ENCODE measurements at regions of chr4 and their contacts with region 1.

Region 1: DNA sequence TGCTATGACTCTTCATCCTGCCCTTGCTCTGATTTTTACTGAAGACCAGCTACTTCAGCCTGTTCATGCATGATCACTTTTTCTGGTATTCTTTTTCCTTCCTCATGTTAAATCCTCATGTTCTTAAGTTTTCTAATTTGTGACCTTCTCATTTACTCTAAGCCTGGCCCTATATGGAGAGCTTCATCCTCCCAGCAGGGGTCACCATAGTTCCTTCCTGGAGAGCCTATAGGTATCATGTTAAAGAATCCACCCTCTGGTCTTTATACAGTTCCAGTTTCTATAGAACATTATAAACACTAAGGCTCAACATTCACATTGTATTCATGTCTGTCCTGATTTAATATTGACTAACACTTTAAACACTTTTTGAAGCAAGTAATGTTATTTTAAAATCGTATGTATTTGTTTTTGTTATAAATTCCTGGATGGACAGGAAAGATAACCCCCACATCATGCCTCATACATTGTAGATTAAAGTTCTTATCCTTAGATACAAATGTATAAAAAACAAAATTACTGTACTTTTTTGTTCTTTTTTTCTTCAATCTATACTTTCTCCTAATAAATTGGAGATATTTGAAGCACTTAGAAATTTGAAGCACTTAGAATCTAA is 53.8 kb upstream of the OTUD4 start:
- DNase-seq: peak; percentile 35
- ATAC-seq: peak; percentile 100
- H3K4me3 ChIP-seq: no peak overlapping the region
- H3K27ac ChIP-seq: no peak overlapping the region
- H3K4me1 ChIP-seq: no peaks in the 10 kb centered on the region
- H3K27me3 ChIP-seq: no peaks in the 10 kb centered on the region
- CTCF ChIP-seq: peak; percentile 83 to 92 (median 88)
- POLR2A ChIP-seq: no peak
- RAD21 ChIP-seq: peak; percentile 94

Region 2: DNA sequence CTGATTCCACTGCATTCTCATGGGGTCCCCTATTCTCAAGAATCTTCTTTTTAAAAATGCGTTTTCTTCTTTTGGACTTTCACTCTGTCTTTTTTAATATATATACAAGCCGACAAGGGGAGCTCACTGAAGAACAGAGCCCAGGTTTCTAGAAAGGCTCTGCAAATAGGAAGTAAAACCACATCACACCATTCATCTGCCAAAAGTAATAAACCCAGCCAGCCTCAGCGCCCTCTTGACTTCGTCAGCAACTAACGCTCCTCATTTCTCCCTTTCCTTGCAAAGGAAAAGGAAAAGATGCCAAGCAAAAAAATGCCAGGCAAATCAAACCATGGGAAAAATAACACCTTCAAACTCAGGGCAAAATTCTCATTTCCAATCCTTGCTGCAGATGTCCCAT is 451.9 kb before region 1 on chr4:
- CTCF ChIA-PET with region 1: no interaction called
- POLR2A ChIA-PET with region 1: no interaction called
- RAD21 ChIA-PET with region 1: no interaction called
- intact Hi-C with region 1: no loop called
- DNase-seq: no peak
- ATAC-seq: no peak
- H3K4me3 ChIP-seq: no peak overlapping the region
- H3K27ac ChIP-seq: no peak overlapping the region
- H3K4me1 ChIP-seq: no peaks in the 10 kb centered on the region
- H3K27me3 ChIP-seq: no peaks in the 10 kb centered on the region
- CTCF ChIP-seq: no peak
- POLR2A ChIP-seq: no peak
- RAD21 ChIP-seq: no peak

Region 3: DNA sequence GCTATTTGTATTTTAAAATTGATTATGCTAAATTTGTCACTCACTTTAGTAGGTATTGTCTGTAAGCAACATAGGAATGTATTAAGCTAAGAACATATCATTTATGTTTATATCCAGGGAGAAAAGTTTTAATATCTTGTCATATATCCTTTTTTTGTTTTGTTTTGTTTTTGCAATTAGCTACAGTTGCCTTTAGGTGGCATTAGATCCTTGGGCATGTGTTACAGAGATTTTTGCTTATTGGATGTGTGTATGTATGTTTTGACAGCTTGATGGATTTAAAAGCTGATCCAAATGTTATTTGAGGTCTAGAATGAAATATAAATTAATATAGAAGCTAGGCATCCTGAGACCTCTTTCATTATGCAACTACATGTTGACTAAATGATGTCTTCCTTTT is 17.7 kb before region 1 on chr4:
- CTCF ChIA-PET with region 1: interaction called, 11 read pairs
- POLR2A ChIA-PET with region 1: no interaction called
- RAD21 ChIA-PET with region 1: interaction called in 1 of 2 experiments, 4 read pairs
- intact Hi-C with region 1: no loop called
- DNase-seq: peak; percentile 24
- ATAC-seq: peak; percentile 46; the same call in 1 of the 2 replicates
- H3K4me3 ChIP-seq: no peak overlapping the region
- H3K27ac ChIP-seq: no peak overlapping the region
- H3K4me1 ChIP-seq: no peaks in the 10 kb centered on the region
- H3K27me3 ChIP-seq: no peaks in the 10 kb centered on the region
- CTCF ChIP-seq: peak; percentile 49 to 75 (median 72); a peak in 5 of 6 replicates
- POLR2A ChIP-seq: no peak
- RAD21 ChIP-seq: peak; percentile 87

Region 4: DNA sequence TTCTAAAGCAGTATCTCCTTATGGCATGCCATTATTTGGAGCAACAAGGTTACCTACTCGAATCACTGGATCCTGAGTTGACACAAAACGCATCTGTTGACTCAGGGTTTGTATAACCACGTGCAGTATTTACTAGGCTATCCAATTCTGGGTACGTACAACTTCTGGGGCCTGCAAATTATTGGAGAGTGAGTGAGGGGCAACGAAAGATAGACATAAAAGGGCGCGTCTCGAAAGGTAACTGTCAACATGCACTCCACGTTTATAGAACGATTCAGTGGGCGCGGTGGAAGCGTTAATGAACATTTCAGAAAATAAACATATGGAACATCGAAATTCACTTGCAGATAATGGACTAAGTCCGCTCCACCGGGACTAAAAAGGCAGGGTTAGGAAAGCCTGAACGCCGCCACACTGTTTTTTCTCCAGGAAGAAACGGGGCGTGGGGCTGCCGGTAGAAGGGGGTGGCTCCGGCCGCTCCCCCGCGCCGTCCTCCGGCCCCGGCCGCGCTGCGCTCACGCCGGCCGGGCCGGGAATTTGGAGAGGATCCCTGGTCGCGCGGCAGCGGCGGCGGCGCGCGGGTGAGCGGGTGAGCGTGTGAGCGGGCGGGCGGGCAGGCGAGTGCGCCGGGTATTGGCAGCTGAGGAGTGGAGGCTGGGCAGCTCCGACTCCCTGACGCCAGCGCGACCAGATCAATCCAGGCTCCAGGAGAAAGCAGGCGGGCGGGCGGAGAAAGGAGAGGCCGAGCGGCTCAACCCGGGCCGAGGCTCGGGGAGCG is 247.2 kb after region 1 on chr4 and contains the start of gene SMAD1:
- CTCF ChIA-PET with region 1: no interaction called
- POLR2A ChIA-PET with region 1: no interaction called
- RAD21 ChIA-PET with region 1: no interaction called
- intact Hi-C with region 1: loop called (anchors 5 kb)
- DNase-seq: peak; percentile 57
- ATAC-seq: peak; percentile 87
- H3K4me3 ChIP-seq: peak within 1 kb of the TSS; percentile 66 to 73
- H3K27ac ChIP-seq: peak within 1 kb of the TSS; percentile 82
- H3K4me1 ChIP-seq: peaks cover 7 to 22% of the 10 kb centered on the region in 2 experiments; a peak in 3 of 4 replicates
- H3K27me3 ChIP-seq: no peaks in the 10 kb centered on the region
- CTCF ChIP-seq: no peak
- POLR2A ChIP-seq: no peak
- RAD21 ChIP-seq: no peak; the same call in 1 of the 2 replicates
- total RNA-seq, gene SMAD1: 23.0 TPM

Region 5: DNA sequence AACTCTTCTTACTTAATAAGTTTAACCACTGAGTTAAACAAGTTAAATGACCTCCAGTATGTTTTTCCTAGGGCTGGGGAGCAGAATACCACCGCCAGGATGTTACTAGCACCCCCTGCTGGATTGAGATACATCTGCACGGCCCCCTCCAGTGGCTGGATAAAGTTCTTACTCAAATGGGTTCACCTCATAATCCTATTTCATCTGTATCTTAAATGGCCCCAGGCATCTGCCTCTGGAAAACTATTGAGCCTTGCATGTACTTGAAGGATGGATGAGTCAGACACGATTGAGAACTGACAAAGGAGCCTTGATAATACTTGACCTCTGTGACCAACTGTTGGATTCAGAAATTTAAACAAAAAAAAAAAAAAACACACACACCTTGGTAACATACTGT is 323.5 kb after region 1 on chr4:
- CTCF ChIA-PET with region 1: interaction called, 22 read pairs
- POLR2A ChIA-PET with region 1: no interaction called
- RAD21 ChIA-PET with region 1: interaction called in 1 of 2 experiments, 5 read pairs
- intact Hi-C with region 1: loop called (anchors 1 kb)
- DNase-seq: peak; percentile 42
- ATAC-seq: peak; percentile 91
- H3K4me3 ChIP-seq: no peak overlapping the region
- H3K27ac ChIP-seq: no peak overlapping the region
- H3K4me1 ChIP-seq: peaks cover 0 to 6% of the 10 kb centered on the region in 2 experiments; a peak in 1 of 4 replicates
- H3K27me3 ChIP-seq: no peaks in the 10 kb centered on the region
- CTCF ChIP-seq: peak; percentile 96 to 98 (median 96)
- POLR2A ChIP-seq: no peak
- RAD21 ChIP-seq: peak; percentile 76

Region 6: GRCh38 chr4:145609481-145610427 is 375.6 kb after region 1 on chr4:
- CTCF ChIA-PET with region 1: interaction called, 22 read pairs
- POLR2A ChIA-PET with region 1: no interaction called
- RAD21 ChIA-PET with region 1: interaction called in 1 of 2 experiments, 5 read pairs
- intact Hi-C with region 1: loop called (anchors 1 kb)
- DNase-seq: peak; percentile 68
- ATAC-seq: peak; percentile 82
- H3K4me3 ChIP-seq: no peak overlapping the region
- H3K27ac ChIP-seq: no peak overlapping the region
- H3K4me1 ChIP-seq: no peaks in the 10 kb centered on the region
- H3K27me3 ChIP-seq: no peaks in the 10 kb centered on the region
- CTCF ChIP-seq: peak; percentile 68 to 87 (median 84)
- POLR2A ChIP-seq: no peak
- RAD21 ChIP-seq: peak; percentile 94

Region 7: GRCh38 chr4:145694929-145695328 is 460.7 kb after region 1 on chr4:
- CTCF ChIA-PET with region 1: no interaction called
- POLR2A ChIA-PET with region 1: no interaction called
- RAD21 ChIA-PET with region 1: no interaction called
- intact Hi-C with region 1: no loop called
- DNase-seq: no peak
- ATAC-seq: no peak
- H3K4me3 ChIP-seq: no peak overlapping the region
- H3K27ac ChIP-seq: no peak overlapping the region
- H3K4me1 ChIP-seq: no peaks in the 10 kb centered on the region
- H3K27me3 ChIP-seq: no peaks in the 10 kb centered on the region
- CTCF ChIP-seq: no peak
- POLR2A ChIP-seq: no peak
- RAD21 ChIP-seq: no peak

Region 8: GRCh38 chr4:147096667-147097604 is 1862.7 kb after region 1 on chr4:
- CTCF ChIA-PET with region 1: no interaction called
- POLR2A ChIA-PET with region 1: no interaction called
- RAD21 ChIA-PET with region 1: no interaction called
- intact Hi-C with region 1: loop called (anchors 10 kb)
- DNase-seq: peak; percentile 32
- ATAC-seq: peak; percentile 76
- H3K4me3 ChIP-seq: no peak overlapping the region
- H3K27ac ChIP-seq: no peak overlapping the region
- H3K4me1 ChIP-seq: no peaks in the 10 kb centered on the region
- H3K27me3 ChIP-seq: peaks cover 37% of the 10 kb centered on the region
- CTCF ChIP-seq: peak; percentile 50 to 72 (median 55); a peak in 5 of 6 replicates
- POLR2A ChIP-seq: no peak
- RAD21 ChIP-seq: peak; percentile 81